ENCODE measurements at regions of chr13 and their contacts with region 1.

Region 1: DNA sequence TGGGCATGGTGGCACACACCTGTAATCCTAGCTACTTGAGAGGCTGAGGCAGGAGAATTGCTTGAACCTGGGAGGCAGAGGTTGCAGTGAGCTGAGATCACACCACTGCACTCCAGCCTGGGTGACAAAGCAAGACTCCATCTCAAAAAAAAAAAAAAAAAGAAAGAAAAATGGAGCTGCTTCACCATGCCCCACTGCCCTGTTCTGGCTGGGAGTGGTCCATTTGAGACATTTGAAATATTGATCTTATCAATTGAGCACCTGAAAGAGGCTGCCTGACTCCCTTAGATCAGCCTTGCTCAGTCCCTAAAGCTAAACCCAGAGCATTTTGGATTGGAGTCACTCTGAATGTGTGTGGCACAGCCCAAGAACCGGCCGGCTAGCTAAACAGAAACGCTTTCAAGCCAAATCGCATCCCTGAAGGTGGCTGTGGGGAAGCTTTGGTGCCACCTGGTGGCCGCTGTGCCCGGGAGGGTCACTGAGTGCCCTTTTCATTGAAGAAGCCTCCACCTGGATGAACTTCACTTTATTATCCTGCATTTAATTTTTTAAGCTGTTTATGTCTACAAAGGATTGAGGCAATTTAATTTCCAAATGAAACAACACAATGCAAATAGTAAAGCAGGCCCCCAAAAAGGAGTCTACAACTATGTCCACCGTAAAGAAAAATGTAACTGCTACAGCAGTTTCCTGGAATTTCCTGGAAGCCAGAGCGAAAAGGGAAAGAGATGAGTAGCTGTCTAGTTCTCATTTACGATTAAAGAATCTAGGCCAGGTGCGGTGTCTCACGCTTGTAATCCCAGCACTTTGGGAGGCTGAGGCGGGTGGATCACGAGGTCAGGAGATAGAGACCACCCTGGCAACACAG is 53.1 kb upstream of the SERPINE3 start:
- DNase-seq: peak; percentile 72
- ATAC-seq: peak; percentile 68
- H3K4me3 ChIP-seq: no peak overlapping the region
- H3K4me3 Mint-ChIP-seq: no peak overlapping the region
- H3K27ac ChIP-seq: no peak overlapping the region
- H3K27ac Mint-ChIP-seq: peak overlapping the region; percentile 1
- H3K4me1 ChIP-seq: peaks cover 0 to 3% of the 10 kb centered on the region in 2 donors
- H3K4me1 Mint-ChIP-seq: no peaks in the 10 kb centered on the region
- H3K27me3 ChIP-seq: peaks cover 0 to 9% (median 0%) of the 10 kb centered on the region in 4 experiments
- H3K27me3 Mint-ChIP-seq: no peaks in the 10 kb centered on the region
- CTCF ChIP-seq: peak; percentile 96

Region 2: DNA sequence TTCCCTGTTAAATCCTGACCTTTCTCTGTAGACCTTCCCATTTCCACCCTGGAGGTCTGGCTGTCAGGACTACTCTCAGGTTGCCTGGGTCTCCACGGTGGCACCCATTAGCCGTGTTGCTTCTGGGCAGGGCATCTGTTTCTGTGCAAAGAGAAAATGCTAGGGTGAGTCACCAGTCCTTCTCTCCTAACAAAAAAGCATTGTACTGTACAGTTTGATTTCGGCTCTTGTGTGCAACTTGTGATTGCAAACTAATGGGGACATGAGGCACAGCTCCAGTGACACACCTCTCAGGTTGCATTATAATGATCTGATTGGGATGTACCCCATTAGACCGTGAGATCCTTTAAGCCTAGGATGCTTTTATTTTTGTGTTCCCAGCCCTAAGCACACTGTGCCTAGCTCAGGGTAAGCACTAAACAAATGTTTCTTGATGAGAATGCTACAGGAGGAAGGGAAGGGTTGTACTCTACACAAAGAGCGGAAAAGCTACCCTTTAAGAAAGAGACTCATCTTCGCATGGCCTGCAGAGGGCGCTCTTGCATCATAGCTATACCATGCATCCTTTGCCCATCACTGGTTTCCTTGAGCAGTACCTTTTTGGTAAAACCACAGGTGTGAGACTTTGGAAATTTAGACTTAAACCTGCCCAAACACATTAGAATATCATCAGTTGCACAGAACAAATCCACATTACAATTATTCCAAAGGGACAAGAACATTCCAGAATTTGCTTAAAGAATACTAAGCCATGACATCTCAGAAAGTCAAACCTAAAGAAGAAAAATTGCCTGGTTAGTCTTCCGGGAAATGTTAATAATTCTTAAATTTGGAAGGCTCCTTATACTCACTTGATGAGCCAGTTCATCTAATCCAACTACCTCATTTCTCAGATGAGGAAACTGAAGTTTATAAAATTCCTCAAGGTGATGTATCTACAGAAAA is 1309.8 kb before region 1 on chr13:
- CTCF ChIA-PET with region 1: no interaction called
- POLR2A ChIA-PET with region 1: no interaction called
- intact Hi-C with region 1: loop called (anchors 5 kb)
- DNase-seq: peak; percentile 86
- ATAC-seq: peak; percentile 78
- H3K4me3 ChIP-seq: no peak overlapping the region
- H3K4me3 Mint-ChIP-seq: no peak overlapping the region
- H3K27ac ChIP-seq: no peak overlapping the region
- H3K27ac Mint-ChIP-seq: no peak overlapping the region
- H3K4me1 ChIP-seq: peaks cover 0 to 4% of the 10 kb centered on the region in 2 donors
- H3K4me1 Mint-ChIP-seq: peaks cover 4% of the 10 kb centered on the region
- H3K27me3 ChIP-seq: no peaks in the 10 kb centered on the region
- H3K27me3 Mint-ChIP-seq: no peaks in the 10 kb centered on the region
- CTCF ChIP-seq: peak; percentile 98

Region 3: DNA sequence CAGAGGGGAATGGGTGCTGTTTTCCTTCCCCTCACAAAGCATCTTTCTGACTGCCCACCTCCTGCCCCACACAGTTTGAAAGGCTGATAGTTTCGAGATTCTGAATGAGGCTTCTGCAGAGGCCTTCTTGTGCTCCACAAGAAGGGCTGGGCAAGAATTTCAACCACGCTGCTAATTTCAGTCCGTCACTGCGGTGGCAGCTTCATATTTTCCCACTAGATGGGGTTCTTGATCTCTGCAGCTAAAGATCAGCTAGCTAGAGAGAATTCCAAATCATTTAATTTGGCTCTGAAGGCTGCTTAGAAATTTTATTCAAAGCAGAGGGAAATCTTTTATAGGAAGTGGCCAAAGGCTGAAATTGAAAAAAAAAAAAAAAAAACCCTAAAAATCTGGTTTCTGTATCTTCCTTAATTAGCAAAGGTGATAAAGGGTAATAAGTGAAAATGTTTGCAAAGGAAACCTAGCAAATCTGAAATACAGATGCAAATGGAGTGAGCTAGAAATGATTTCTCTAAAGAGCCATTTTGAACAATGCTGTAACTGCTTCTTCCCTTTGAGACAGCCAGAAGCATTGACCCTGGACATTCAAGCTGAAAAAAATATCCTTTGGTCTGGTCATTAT is 137.3 kb before region 1 on chr13:
- CTCF ChIA-PET with region 1: interaction called, 10 read pairs
- POLR2A ChIA-PET with region 1: no interaction called
- intact Hi-C with region 1: no loop called
- DNase-seq: no peak
- ATAC-seq: no peak
- H3K4me3 ChIP-seq: no peak overlapping the region
- H3K4me3 Mint-ChIP-seq: no peak overlapping the region
- H3K27ac ChIP-seq: no peak overlapping the region
- H3K27ac Mint-ChIP-seq: no peak overlapping the region
- H3K4me1 ChIP-seq: no peaks in the 10 kb centered on the region
- H3K4me1 Mint-ChIP-seq: no peaks in the 10 kb centered on the region
- H3K27me3 ChIP-seq: no peaks in the 10 kb centered on the region
- H3K27me3 Mint-ChIP-seq: peaks cover 24% of the 10 kb centered on the region
- CTCF ChIP-seq: no peak

Region 4: DNA sequence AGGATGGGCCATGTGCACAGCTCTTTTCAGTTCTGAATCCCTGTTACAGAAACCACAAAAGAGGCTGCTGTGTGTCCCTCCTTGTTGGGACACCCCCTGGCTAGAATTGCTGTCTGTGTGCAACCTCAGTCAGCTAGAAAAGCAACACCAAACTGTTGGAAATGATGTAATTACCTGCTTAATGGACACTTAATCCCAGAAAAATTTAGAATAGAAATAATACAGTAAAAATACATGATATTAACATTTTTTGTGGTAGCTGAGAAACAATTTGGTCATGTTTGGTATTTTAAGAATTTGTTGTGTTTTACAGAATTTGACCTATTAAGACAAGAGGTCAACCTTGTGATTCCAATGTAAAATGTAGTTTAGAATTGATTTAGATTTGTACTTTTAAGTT is 17.3 kb before region 1 on chr13:
- CTCF ChIA-PET with region 1: interaction called, 13 read pairs
- POLR2A ChIA-PET with region 1: no interaction called
- intact Hi-C with region 1: no loop called
- DNase-seq: no peak
- ATAC-seq: no peak
- H3K4me3 ChIP-seq: no peak overlapping the region
- H3K4me3 Mint-ChIP-seq: no peak overlapping the region
- H3K27ac ChIP-seq: no peak overlapping the region
- H3K27ac Mint-ChIP-seq: no peak overlapping the region
- H3K4me1 ChIP-seq: no peaks in the 10 kb centered on the region
- H3K4me1 Mint-ChIP-seq: no peaks in the 10 kb centered on the region
- H3K27me3 ChIP-seq: peaks cover 0 to 2% (median 0%) of the 10 kb centered on the region in 4 experiments
- H3K27me3 Mint-ChIP-seq: peaks cover 6% of the 10 kb centered on the region
- CTCF ChIP-seq: no peak

Region 5: DNA sequence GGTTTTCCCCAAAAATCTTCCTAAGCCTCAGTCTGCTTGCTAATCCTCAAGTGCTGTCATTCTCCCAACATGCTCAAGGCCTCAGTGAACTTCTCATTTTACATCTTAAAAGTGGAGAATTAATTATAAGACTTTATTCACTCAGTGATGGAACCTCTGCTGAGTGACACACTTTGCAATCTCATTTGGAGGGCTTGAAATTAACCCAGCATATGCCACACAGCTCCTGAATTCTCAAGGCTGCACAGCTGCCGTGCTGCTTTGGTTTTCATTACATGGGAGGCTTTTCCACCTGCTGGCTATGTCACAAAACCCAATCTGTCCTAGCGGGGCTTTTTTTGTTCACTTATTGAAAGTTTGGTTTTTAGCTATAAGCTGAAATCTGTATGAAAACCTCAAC is 24.9 kb after region 1 on chr13:
- CTCF ChIA-PET with region 1: interaction called, 14 read pairs
- POLR2A ChIA-PET with region 1: no interaction called
- intact Hi-C with region 1: no loop called
- DNase-seq: no peak
- ATAC-seq: no peak
- H3K4me3 ChIP-seq: no peak overlapping the region
- H3K4me3 Mint-ChIP-seq: no peak overlapping the region
- H3K27ac ChIP-seq: no peak overlapping the region
- H3K27ac Mint-ChIP-seq: no peak overlapping the region
- H3K4me1 ChIP-seq: no peaks in the 10 kb centered on the region
- H3K4me1 Mint-ChIP-seq: no peaks in the 10 kb centered on the region
- H3K27me3 ChIP-seq: no peaks in the 10 kb centered on the region
- H3K27me3 Mint-ChIP-seq: peaks cover 19% of the 10 kb centered on the region
- CTCF ChIP-seq: no peak

Region 6: GRCh38 chr13:52128714-52129700 is 842.6 kb after region 1 on chr13 and contains the start of gene NEK5:
- CTCF ChIA-PET with region 1: interaction called, 5 read pairs
- POLR2A ChIA-PET with region 1: no interaction called
- intact Hi-C with region 1: loop called (anchors 5 kb)
- DNase-seq: peak; percentile 64
- ATAC-seq: peak; percentile 66
- H3K4me3 ChIP-seq: peak within 1 kb of the TSS; percentile 50 to 67 (median 61)
- H3K4me3 Mint-ChIP-seq: peak within 1 kb of the TSS; percentile 86
- H3K27ac ChIP-seq: no peak within 1 kb of the TSS
- H3K27ac Mint-ChIP-seq: no peak within 1 kb of the TSS
- H3K4me1 ChIP-seq: peaks cover 17 to 18% of the 10 kb centered on the region in 2 donors
- H3K4me1 Mint-ChIP-seq: peaks cover 16% of the 10 kb centered on the region
- H3K27me3 ChIP-seq: peaks cover 0 to 25% (median 16%) of the 10 kb centered on the region in 4 experiments
- H3K27me3 Mint-ChIP-seq: peaks cover 21% of the 10 kb centered on the region
- CTCF ChIP-seq: peak; percentile 67
- total RNA-seq, gene NEK5: not detected in 2 replicates

Measured in B cell (primary cell).